ENCODE measurements at regions of chr2 and their contacts with region 1.

Region 1: GRCh38 chr2:11129598-11130449 is 25.4 kb upstream of the SLC66A3 start:
- DNase-seq: no peak

Region 2: GRCh38 chr2:11004199-11004598 is 125.6 kb before region 1 on chr2:
- intact Hi-C with region 1: no loop called
- DNase-seq: no peak

Region 3: DNA sequence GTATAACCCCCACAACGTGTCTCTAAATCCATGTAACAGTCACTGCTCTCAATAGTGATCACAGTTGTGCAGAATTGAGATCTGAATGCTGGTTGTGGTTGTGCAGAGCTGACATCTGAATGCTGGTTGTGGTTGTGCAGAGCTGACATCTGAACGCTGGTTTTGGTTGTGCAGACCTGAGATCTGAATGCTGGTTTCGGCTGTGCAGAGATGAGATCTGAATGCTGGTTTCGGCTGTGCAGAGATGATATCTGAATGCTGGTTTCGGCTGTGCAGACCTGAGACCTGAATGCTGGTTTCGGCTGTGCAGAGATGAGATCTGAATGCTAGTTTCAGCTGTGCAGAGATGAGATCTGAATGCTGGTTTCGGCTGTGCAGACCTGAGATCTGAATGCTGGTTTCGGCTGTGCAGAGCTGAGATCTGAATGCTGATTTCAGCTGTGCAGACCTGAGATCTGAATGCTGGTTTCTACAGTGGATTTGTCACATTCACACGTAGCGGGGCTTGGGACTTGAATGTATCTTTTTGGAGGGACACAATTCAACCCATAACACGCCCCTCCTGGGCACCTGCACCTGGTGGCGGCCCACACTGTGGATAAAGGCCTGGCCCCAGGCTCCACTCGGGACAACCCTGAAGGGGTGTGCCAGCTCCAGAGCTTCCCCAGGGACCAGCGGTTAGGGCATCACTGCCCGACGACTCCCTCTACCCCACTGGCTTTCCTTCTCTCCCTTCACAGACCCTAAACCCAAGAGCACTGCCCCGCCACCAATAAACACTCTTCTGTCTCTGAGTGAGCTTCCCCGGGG is 25.6 kb before region 1 on chr2:
- intact Hi-C with region 1: no loop called
- DNase-seq: no peak

Region 4: GRCh38 chr2:11208083-11208482 is 78.3 kb after region 1 on chr2:
- intact Hi-C with region 1: loop called (anchors 5 kb)
- DNase-seq: no peak

Region 5: GRCh38 chr2:11234309-11234708 is 104.5 kb after region 1 on chr2:
- intact Hi-C with region 1: loop called (anchors 10 kb)
- DNase-seq: no peak

Region 6: DNA sequence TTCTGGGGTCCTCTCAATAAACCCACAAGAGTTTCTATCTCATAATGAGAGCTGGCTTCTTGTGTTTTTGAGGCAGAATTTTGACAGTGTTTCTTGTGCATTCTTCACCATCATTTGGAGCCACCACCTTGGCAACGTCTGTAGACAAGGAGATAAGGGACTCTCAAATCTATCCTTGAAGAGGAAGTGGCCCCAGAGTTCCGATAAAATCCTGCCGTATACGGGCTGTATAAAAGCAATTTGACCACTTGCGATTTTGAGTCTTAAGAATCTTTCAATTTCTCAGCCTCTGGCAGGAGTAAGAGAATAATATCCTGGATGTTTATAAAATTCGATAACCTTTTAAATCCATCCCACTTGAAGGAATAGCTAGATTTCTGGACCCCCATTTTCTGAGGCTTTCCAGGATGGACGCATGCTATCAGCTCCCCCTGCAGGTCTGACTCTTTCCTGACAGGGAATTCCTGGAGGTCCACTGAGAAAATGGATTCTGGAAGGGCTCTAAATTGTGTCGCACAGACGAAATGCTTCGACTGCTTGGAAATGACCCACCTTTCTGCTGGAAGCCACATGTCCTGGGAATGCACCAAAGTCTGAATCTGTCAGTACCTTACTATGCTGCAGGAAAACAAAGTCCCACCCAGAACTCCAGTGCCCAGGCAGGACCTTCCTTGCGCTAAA is 282.1 kb after region 1 on chr2:
- intact Hi-C with region 1: loop called (anchors 2 kb)
- DNase-seq: no peak

Region 7: DNA sequence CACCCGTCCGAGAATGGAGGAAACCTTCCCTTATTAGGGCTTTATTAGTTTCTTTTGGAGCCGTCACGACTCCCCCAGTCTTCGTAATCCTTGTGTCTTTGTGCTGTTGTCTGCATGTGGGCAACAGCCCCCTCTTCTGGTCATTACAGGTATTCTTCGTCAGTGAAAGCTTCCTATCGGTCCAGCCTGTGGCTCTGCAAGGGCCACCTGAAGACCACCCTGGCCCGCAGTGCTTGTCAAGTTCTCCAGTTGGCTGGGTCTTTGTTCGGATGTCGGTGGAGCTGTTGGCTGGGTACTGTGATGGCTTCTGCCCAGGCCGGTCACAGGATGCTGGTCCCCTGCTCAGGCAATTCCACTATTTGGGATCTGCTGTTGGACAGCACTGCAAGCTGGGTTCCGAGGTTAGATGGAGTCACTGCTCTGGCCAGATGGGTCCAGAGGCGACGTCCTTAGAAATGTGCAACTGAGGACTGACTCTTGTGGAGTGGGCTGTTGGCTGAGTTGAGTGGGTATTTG is 317.0 kb after region 1 on chr2:
- intact Hi-C with region 1: loop called (anchors 5 kb)
- DNase-seq: no peak

Region 8: GRCh38 chr2:11589316-11589940 is 459.6 kb after region 1 on chr2:
- intact Hi-C with region 1: loop called (anchors 5 kb)
- DNase-seq: no peak